ENCODE measurements at regions of chr7 and their contacts with region 1.

Region 1: GRCh38 chr7:155796381-155797261 is 15.6 kb downstream of the SHH start:
- DNase-seq: no peak
- ATAC-seq: peak; percentile 85
- H3K4me3 ChIP-seq: peak overlapping the region; percentile 33 to 68 (median 38); a peak in 5 of 6 replicates
- H3K27ac ChIP-seq: no peak overlapping the region
- H3K4me1 ChIP-seq: peaks cover 43% of the 10 kb centered on the region
- H3K27me3 ChIP-seq: peaks cover 7 to 38% of the 10 kb centered on the region in 2 experiments; a peak in 4 of 5 replicates
- CTCF ChIP-seq: peak; percentile 95
- EP300 ChIP-seq: no peak
- POLR2A ChIP-seq: no peak
- RAD21 ChIP-seq: peak; percentile 96

Region 2: DNA sequence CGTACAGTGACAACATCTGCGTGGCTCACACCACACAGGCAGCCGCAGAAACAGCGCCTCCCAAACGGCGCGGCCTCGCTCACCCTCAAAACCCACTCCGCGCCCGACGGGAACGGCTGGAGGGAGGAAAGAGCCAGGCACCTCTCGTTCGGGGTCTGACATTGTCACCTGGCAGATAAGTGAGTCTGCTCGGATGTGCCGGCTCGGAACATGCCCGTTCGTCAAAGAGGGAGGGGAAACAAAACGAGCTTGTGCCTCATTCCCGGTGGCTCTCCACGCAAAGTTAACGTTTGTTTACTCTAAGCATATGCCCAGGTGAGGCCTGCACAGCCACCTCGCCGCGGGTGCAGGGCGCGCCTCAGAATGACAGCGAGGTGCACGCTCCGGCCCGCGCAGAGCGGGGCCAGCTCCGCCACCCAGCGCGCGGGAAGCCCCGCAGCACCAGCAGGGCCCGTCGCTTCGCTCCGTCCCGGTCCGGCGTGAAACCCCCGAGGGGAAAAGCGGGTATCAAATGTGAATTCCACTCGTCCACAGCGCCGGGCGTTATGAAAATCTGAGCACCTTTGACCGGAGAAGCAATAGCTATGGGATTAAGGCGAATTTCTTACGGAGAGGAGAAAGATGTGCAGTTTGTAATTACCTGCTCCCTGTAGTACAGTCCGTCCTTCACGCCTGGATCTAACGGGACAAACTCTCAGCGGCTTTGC is 263.3 kb before region 1 on chr7:
- CTCF ChIA-PET with region 1: no interaction called
- POLR2A ChIA-PET with region 1: no interaction called
- in situ Hi-C with region 1: no loop called
- intact Hi-C with region 1: no loop called
- DNase-seq: no peak
- ATAC-seq: peak; percentile 73
- H3K4me3 ChIP-seq: peak overlapping the region; percentile 30 to 66 (median 43)
- H3K27ac ChIP-seq: no peak overlapping the region
- H3K4me1 ChIP-seq: peaks cover 33% of the 10 kb centered on the region
- H3K27me3 ChIP-seq: peaks cover 12 to 77% of the 10 kb centered on the region in 2 experiments; a peak in 4 of 5 replicates
- CTCF ChIP-seq: peak; percentile 15
- EP300 ChIP-seq: no peak
- POLR2A ChIP-seq: no peak
- RAD21 ChIP-seq: no peak

Region 3: DNA sequence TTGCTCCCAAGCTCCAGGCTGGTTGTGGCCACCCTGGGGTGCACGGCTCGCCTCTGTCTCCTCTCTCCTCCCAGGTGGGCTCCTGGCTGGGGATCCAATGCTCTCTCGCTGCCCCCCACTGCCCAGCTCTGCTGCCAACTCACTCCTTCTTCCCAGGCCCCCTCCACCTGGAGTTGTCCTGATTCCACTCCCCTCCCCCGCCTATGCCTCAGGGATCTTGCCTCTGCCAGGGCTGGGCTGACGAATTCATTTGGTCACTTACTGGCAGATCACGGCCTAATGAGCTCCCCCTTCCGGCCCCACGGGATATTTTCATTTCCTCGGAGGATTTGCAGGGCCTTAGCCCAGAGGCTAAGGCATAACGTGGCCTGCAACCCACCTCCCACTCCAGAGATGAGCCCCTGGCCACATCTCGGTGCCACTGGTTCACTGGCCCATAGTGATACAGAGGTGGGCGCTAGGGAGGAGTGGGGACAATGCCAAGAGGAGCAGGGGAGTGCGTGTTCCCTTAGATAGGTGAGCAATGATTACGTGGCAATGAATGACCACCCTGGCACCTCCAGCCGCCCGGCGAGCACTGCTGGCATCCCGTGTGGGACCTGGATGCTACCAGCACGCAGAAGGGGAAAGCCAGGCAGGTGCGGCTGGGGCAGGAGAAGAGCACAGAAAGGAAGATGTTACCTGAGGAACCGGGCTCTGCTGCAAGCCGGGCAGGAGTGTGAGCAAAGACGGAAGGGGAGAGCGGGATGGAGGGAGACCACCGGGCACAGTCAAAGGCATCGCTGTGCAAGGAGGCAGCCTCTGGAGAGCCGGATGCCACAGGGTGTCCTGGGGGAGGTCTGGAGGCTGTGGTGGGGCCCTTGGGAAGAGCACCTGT is 360.4 kb after region 1 on chr7:
- CTCF ChIA-PET with region 1: interaction called, 4 read pairs
- POLR2A ChIA-PET with region 1: no interaction called
- in situ Hi-C with region 1: no loop called
- intact Hi-C with region 1: loop called (anchors 1 kb)
- DNase-seq: peak; percentile 20
- ATAC-seq: peak; percentile 89
- H3K4me3 ChIP-seq: no peak overlapping the region
- H3K27ac ChIP-seq: no peak overlapping the region
- H3K4me1 ChIP-seq: no peaks in the 10 kb centered on the region
- H3K27me3 ChIP-seq: peaks cover 2 to 30% of the 10 kb centered on the region in 2 experiments; a peak in 4 of 5 replicates
- CTCF ChIP-seq: peak; percentile 63
- EP300 ChIP-seq: no peak
- POLR2A ChIP-seq: no peak
- RAD21 ChIP-seq: peak; percentile 57; the same call in 1 of the 2 replicates

Region 4: DNA sequence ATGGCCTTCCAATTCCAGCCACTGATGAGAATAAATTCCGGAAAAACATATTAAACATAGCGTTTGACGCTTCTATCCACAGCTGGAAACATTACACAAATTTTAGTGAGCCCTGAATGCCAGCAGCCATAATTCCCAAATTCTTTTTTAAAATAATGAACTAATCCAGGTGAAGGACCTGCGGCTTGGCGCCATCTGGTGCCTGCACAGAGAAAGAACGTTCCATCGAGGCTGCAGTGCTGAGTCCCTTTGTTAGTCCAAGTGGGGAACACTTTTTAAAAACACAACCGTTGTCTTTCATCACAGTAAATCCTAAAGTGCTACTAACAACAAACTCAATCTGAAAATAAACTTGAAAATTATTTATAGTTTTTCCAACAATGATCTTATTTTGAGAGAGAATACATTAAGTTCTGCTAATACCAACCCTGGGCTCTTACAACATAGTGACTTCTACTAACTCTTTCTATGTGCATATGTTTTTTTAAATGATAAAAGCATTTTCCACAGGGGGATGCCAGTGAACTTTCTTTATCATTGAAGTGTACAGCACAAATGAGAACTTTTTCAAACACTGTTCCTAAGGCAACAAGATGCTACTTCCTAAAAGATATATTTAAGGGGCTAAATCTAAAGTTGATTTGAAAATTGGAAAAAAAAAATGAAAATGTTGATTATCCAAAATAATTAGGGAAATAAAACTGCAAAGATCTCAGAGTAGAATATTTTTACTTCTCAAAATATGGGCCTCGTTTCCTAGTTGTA is 677.0 kb after region 1 on chr7:
- CTCF ChIA-PET with region 1: interaction called, 8 read pairs
- POLR2A ChIA-PET with region 1: no interaction called
- in situ Hi-C with region 1: no loop called
- intact Hi-C with region 1: loop called (anchors 1 kb)
- DNase-seq: peak; percentile 25
- ATAC-seq: peak; percentile 72
- H3K4me3 ChIP-seq: peak overlapping the region in 2 of 3 experiments; percentile 25 to 32; a peak in 3 of 6 replicates
- H3K27ac ChIP-seq: peak overlapping the region; percentile 54
- H3K4me1 ChIP-seq: peaks cover 34% of the 10 kb centered on the region
- H3K27me3 ChIP-seq: no peaks in the 10 kb centered on the region
- CTCF ChIP-seq: peak; percentile 80
- EP300 ChIP-seq: no peak
- POLR2A ChIP-seq: no peak
- RAD21 ChIP-seq: peak; percentile 70; the same call in 1 of the 2 replicates

Region 5: GRCh38 chr7:156816943-156817572 is 1020.4 kb after region 1 on chr7:
- CTCF ChIA-PET with region 1: interaction called, 6 read pairs
- POLR2A ChIA-PET with region 1: no interaction called
- in situ Hi-C with region 1: loop called (anchors 5 kb)
- intact Hi-C with region 1: loop called (anchors 5 kb)
- DNase-seq: peak; percentile 10
- ATAC-seq: no peak
- H3K4me3 ChIP-seq: no peak overlapping the region
- H3K27ac ChIP-seq: no peak overlapping the region
- H3K4me1 ChIP-seq: peaks cover 21% of the 10 kb centered on the region
- H3K27me3 ChIP-seq: no peaks in the 10 kb centered on the region
- CTCF ChIP-seq: peak; percentile 41
- EP300 ChIP-seq: no peak
- POLR2A ChIP-seq: no peak
- RAD21 ChIP-seq: no peak